MCF 10A (cell line): ENCODE measurements at regions of chr6 and their contacts with region 1.

Region 1: DNA sequence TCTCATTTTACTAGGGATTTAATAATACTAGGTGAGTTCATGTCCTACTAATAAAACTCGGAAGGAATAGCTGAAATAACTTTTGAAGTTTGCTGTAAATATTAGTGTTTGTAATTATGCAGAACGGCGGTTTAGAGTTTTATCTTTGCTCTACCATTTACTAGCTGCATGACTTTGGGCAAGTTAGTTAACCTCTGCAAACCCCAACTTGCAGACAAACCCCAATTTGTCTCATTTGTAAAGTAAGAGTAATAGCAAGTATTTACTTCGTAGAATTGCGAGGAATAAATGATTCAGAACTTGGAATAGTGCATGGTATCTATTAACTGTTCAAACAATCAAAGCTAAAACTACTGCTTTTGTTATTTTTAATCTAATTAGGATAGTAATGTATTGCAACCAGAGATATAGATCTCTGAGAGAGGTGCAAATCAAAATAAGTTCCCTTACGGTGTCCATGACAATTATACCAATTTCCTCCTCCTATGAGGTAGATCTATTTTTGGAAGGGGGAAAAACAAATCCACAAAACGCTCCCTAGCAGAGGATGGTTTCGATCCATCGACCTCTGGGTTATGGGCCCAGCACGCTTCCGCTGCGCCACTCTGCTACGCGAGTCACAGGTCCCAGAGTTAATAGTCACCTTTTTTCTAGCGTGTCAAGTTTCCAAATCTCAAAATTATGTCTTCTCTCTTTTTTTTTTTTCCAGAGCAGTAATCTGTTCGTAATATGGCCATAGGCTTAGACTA is 35.1 kb upstream of the BTN3A2 start:
- DNase-seq: peak; percentile 73
- H3K4me3 Mint-ChIP-seq: peak overlapping the region; percentile 75
- H3K27ac Mint-ChIP-seq: peak overlapping the region; percentile 63
- H3K4me1 Mint-ChIP-seq: peaks cover 12% of the 10 kb centered on the region
- H3K27me3 Mint-ChIP-seq: no peaks in the 10 kb centered on the region
- CTCF ChIP-seq: no peak

Region 2: GRCh38 chr6:26163427-26164119 is 166.4 kb before region 1 on chr6:
- CTCF ChIA-PET with region 1: no interaction called
- POLR2A ChIA-PET with region 1: no interaction called
- intact Hi-C with region 1: no loop called
- DNase-seq: no peak
- H3K4me3 Mint-ChIP-seq: no peak overlapping the region
- H3K27ac Mint-ChIP-seq: no peak overlapping the region
- H3K4me1 Mint-ChIP-seq: peaks cover 6% of the 10 kb centered on the region
- H3K27me3 Mint-ChIP-seq: no peaks in the 10 kb centered on the region
- CTCF ChIP-seq: no peak

Region 3: GRCh38 chr6:26553635-26554446 is 223.9 kb after region 1 on chr6:
- CTCF ChIA-PET with region 1: no interaction called
- POLR2A ChIA-PET with region 1: interaction called, 4 read pairs
- intact Hi-C with region 1: loop called (anchors 2 kb)
- DNase-seq: peak; percentile 95
- H3K4me3 Mint-ChIP-seq: no peak overlapping the region
- H3K27ac Mint-ChIP-seq: no peak overlapping the region
- H3K4me1 Mint-ChIP-seq: peaks cover 21% of the 10 kb centered on the region
- H3K27me3 Mint-ChIP-seq: no peaks in the 10 kb centered on the region
- CTCF ChIP-seq: no peak

Region 4: GRCh38 chr6:27280064-27280539 is 950.2 kb after region 1 on chr6:
- CTCF ChIA-PET with region 1: no interaction called
- POLR2A ChIA-PET with region 1: no interaction called
- intact Hi-C with region 1: no loop called
- DNase-seq: peak; percentile 62
- H3K4me3 Mint-ChIP-seq: peak overlapping the region; percentile 68
- H3K27ac Mint-ChIP-seq: peak overlapping the region; percentile 61
- H3K4me1 Mint-ChIP-seq: no peaks in the 10 kb centered on the region
- H3K27me3 Mint-ChIP-seq: no peaks in the 10 kb centered on the region
- CTCF ChIP-seq: no peak